ENCODE measurements at regions of chr20 and their contacts with region 1.

Region 1: DNA sequence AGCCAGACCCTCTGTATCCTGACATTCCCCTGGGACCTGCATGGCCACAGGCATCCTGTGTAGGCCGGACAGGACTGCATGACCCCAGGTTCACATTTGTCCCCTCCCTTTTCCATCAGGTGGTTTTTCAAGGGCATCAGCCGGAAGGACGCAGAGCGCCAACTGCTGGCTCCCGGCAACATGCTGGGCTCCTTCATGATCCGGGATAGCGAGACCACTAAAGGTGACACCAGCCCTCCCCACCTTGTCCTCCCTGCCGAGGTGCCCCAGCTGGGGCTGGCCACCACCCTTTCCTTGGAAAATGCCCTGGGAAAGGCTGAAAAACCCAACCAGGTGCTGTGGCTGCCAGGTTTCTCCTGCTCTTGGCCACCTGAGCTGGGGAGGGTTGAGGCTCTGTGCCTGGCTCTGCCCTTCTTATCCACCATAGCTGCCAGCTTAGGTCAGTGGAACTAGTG is 27.6 kb downstream of the HCK start:
- DNase-seq: no peak
- H3K4me3 ChIP-seq: no peak overlapping the region
- H3K4me3 Mint-ChIP-seq: no peak overlapping the region
- H3K27ac ChIP-seq: no peak overlapping the region
- H3K27ac Mint-ChIP-seq: no peak overlapping the region
- H3K4me1 ChIP-seq: no peaks in the 10 kb centered on the region
- H3K4me1 Mint-ChIP-seq: no peaks in the 10 kb centered on the region
- H3K27me3 ChIP-seq: no peaks in the 10 kb centered on the region
- H3K27me3 Mint-ChIP-seq: peaks cover 23 to 39% of the 10 kb centered on the region in 2 donors

Region 2: GRCh38 chr20:31967830-31968249 is 111.8 kb before region 1 on chr20 and contains the start of gene XKR7:
- CTCF ChIA-PET with region 1: no interaction called
- POLR2A ChIA-PET with region 1: no interaction called
- intact Hi-C with region 1: no loop called
- DNase-seq: no peak
- H3K4me3 ChIP-seq: no peak within 1 kb of the TSS
- H3K4me3 Mint-ChIP-seq: peak within 1 kb of the TSS; percentile 77 to 87 (median 82)
- H3K27ac ChIP-seq: no peak within 1 kb of the TSS
- H3K27ac Mint-ChIP-seq: peak within 1 kb of the TSS in 4 of 7 donors; percentile 29 to 81 (median 54)
- H3K4me1 ChIP-seq: no peaks in the 10 kb centered on the region
- H3K4me1 Mint-ChIP-seq: peaks cover 2 to 13% (median 7%) of the 10 kb centered on the region in 4 donors
- H3K27me3 ChIP-seq: peaks cover 20% of the 10 kb centered on the region
- H3K27me3 Mint-ChIP-seq: peaks cover 42 to 45% of the 10 kb centered on the region in 2 donors
- total RNA-seq, gene XKR7: not detected

Region 3: GRCh38 chr20:32091888-32092346 is 12.2 kb after region 1 on chr20:
- CTCF ChIA-PET with region 1: interaction called, 22 read pairs
- POLR2A ChIA-PET with region 1: no interaction called
- intact Hi-C with region 1: no loop called
- DNase-seq: peak; percentile 60 to 71 (median 69)
- H3K4me3 ChIP-seq: no peak overlapping the region
- H3K4me3 Mint-ChIP-seq: peak overlapping the region in 1 of 8 donors; percentile 43
- H3K27ac ChIP-seq: no peak overlapping the region
- H3K27ac Mint-ChIP-seq: no peak overlapping the region
- H3K4me1 ChIP-seq: no peaks in the 10 kb centered on the region
- H3K4me1 Mint-ChIP-seq: peaks cover 0 to 4% (median 0%) of the 10 kb centered on the region in 4 donors
- H3K27me3 ChIP-seq: no peaks in the 10 kb centered on the region
- H3K27me3 Mint-ChIP-seq: peaks cover 3 to 4% of the 10 kb centered on the region in 2 donors

Measured in CD4-positive, alpha-beta memory T cell (primary cell).